RWPE1 (cell line): ENCODE measurements at regions of chr12 and their contacts with region 1.

Region 1: DNA sequence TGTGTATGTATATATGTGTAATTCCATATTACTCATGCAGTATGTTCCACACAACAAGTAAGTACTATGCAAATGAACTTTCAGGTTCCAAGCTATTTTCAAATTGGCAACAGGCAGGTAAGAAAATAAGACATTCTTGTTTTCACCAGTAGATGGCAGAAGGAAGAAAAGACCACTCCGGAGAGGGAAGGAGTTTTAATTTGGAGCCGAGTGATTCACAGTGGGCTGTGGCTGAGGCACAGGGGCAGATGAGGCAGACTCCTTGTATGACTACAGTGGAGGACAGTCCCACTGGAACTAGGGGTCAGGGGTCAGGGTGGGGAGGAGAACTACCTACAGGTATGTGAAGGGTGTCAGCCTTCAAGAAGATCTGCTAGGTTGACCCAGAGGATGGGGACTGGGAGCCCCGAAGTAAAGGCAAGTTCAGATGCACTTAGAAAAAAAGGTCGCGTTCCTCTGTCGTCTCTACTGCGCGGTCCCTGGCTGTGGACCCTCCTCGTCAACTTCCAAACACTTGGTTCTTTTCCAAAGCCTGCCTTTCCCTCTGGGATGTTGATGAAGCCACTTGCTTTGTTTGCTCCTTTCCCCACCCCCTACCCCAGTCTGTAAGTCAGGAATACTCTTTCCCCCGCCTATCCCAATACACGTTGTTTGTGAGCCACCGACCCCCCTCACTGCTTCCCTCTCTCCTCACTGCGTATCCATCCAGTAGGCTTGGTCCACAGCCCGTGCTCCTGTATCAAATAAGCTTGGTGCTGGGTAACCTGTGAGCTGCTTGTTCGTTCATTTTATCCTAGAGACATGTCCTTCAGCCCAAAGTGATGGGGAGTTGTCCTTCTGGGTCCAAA is 24.1 kb downstream of the DDX47 start:
- DNase-seq: peak; percentile 69
- H3K27ac ChIP-seq: peak overlapping the region; percentile 78
- CTCF ChIP-seq: peak; percentile 35; the same call in 1 of the 2 replicates

Region 2: GRCh38 chr12:11633968-11634367 is 1203.3 kb before region 1 on chr12:
- CTCF ChIA-PET with region 1: no interaction called
- POLR2A ChIA-PET with region 1: interaction called, 10 read pairs
- DNase-seq: no peak
- H3K27ac ChIP-seq: no peak overlapping the region
- CTCF ChIP-seq: no peak

Region 3: GRCh38 chr12:12797794-12798152 is 39.5 kb before region 1 on chr12:
- CTCF ChIA-PET with region 1: no interaction called
- POLR2A ChIA-PET with region 1: no interaction called
- DNase-seq: no peak
- H3K27ac ChIP-seq: no peak overlapping the region
- CTCF ChIP-seq: no peak

Region 4: GRCh38 chr12:12890815-12891645 is 53.8 kb after region 1 on chr12 and contains the start of gene GPRC5A:
- CTCF ChIA-PET with region 1: interaction called, 13 read pairs
- POLR2A ChIA-PET with region 1: interaction called, 11 read pairs
- DNase-seq: peak; percentile 87
- H3K27ac ChIP-seq: peak within 1 kb of the TSS; percentile 92
- CTCF ChIP-seq: peak; percentile 7; the same call in 1 of the 2 replicates